Thyroid gland (tissue), 4 donors: ENCODE measurements at regions of chr9 and their contacts with region 1.

Region 1: GRCh38 chr9:137406876-137407589 is 15.9 kb downstream of the EXD3 start:
- DNase-seq: peak; percentile 65 to 70
- H3K4me3 ChIP-seq: peak overlapping the region in 2 of 3 donors; percentile 13 to 30
- H3K27ac ChIP-seq: no peak overlapping the region
- H3K4me1 ChIP-seq: peaks cover 22 to 36% of the 10 kb centered on the region in 2 donors
- H3K27me3 ChIP-seq: no peaks in the 10 kb centered on the region
- CTCF ChIP-seq: peak; percentile 42 to 89 (median 78)
- POLR2A ChIP-seq: no peak

Region 2: DNA sequence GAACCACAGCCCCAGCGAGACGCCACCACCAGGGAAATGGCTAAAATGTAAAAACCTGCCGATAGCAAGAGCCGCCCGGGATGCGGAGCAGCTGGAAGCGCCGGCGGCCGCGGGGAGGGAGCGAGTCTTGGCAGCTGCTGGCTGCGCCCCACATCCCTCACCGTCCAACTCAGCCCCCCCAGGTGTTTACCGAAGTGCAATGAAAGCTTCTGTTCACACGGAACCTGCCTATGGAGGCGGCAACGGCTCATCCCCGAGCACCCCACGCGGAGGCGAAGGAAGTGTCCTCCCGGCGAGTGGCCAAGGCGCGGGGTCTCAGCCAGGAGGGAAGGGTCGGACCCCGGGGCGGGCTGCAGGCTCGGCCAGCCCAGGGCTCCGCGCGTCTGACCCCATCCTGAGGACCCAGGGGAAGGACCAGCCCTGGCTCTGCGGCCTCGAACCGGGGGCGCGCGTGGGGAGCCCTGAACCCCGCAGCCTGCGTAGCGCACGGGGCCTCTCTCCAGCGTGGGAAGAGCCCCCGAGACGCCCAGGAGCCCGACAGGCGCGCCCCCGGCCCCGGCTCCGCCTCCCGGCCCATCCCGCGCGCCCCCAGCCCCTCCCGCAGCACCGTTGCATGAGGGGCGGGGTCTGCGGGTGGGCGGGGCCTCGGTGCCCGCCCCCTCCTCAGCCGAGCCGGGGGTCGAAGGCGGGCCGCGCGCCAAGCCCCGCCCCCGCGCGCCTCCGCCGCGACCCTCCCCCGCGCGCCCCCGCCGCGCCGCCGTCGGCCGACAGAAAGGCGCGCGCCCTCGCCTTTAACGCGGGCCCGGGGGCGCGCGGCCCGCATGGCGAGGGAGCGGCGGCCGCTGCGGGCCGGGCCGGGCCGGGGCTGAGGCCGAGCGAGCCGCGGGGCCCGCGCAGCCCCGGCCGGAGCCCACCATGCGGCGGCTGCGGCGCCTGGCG is 695.0 kb before region 1 on chr9 and contains the start of gene DIPK1B:
- intact Hi-C with region 1: no loop called
- DNase-seq: no peak
- H3K4me3 ChIP-seq: peak within 1 kb of the TSS in 2 of 3 donors; percentile 32 to 72
- H3K27ac ChIP-seq: peak within 1 kb of the TSS in 2 of 3 donors; percentile 37 to 52
- H3K4me1 ChIP-seq: peaks cover 12 to 33% of the 10 kb centered on the region in 2 donors
- H3K27me3 ChIP-seq: no peaks in the 10 kb centered on the region
- CTCF ChIP-seq: no peak
- POLR2A ChIP-seq: peak in 1 of 2 donors; percentile 25
- total RNA-seq, gene DIPK1B: 19.4 to 23.6 (median 22.6) TPM

Region 3: DNA sequence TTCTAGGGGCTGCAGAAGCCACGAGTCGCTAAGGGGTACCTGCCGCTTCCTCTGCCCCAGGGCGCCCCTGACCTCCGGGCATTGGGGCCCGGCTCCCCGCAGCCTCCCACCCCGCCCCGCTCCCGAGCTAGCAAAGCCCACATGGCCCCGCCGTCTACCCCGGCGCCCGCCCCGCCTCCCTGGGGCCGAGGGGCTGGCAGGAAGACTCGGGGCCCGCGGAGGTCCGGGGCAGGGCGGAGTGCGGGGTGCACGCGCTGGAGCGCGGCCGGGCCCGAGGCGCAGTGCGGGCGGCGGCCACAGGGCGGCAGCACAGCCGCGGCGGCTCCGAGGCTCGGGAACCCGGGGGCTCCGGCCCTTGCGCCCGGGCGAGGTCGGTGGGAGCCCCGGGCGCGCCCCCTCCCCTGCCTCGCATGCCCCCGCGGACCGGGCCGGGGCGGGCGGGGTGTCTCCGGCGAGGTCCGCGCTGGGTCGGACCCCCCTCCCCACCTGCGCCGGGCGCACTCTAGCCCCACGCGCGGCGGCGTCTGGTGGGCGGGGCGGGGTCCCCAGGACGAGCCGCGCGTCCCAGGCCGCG is 111.7 kb before region 1 on chr9:
- intact Hi-C with region 1: loop called (anchors 5 kb)
- DNase-seq: peak in 1 of 2 donors; percentile 22
- H3K4me3 ChIP-seq: peak overlapping the region in 1 of 3 donors; percentile 26
- H3K27ac ChIP-seq: no peak overlapping the region
- H3K4me1 ChIP-seq: peaks cover 11 to 27% of the 10 kb centered on the region in 2 donors
- H3K27me3 ChIP-seq: no peaks in the 10 kb centered on the region
- CTCF ChIP-seq: peak in 4 of 6 experiments; percentile 17 to 97 (median 85)
- POLR2A ChIP-seq: no peak